ENCODE measurements at regions of chr4 and their contacts with region 1.

Region 1: DNA sequence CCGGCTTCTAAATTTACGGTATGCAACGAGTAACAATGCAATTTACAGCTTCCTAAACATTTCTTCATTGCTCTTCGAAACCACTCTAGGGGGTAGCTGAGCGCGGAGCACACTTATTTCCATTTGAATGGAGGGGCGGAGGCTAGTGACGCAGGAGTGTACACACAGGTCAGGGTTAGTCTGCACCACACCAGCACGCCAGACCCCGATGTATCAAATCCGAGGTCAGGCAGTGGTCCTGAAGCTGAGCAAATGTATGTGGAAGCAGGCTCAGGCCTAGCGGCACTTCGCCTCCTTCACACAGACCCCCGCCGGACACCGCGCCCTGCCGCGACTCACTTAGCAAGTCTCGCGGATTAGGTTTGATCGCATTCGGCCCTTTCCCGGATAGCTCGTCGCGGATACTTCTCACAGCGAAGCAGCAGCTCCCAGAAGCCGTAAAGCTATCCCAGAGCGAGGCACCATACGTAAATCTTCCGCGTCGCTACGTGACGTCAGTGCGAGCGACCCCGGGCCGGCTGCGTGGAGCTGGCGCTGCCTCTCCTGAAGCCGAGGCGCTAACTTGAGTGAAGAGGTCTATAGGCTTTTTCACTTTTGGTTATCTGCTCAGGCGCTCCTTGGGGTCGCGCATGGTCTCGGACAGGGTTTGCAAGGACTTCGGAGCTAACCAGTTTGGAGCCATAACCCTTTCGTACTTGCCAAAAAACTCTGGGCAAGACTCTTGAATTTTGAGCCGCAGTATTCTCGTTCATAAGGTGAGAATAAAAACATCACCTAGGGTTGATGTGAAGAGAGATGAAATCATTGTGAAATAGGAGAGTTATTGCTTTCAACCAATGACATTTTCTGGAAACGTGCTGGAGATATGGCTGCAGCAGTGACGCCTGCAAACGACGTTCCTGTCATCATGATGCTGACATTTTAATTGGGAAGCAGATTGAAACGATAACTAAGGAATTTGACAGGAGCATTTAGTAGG is at the start of gene AASDH:
- DNase-seq: peak; percentile 94
- H3K4me3 Mint-ChIP-seq: peak within 1 kb of the TSS; percentile 96
- H3K27ac Mint-ChIP-seq: peak within 1 kb of the TSS; percentile 99
- H3K4me1 Mint-ChIP-seq: peaks cover 29% of the 10 kb centered on the region
- H3K27me3 Mint-ChIP-seq: no peaks in the 10 kb centered on the region
- CTCF ChIP-seq: no peak
- total RNA-seq, gene AASDH: 10.8 and 12.9 TPM in 2 replicates

Region 2: GRCh38 chr4:55948726-55949474 is 438.4 kb before region 1 on chr4 and contains the start of gene CEP135:
- CTCF ChIA-PET with region 1: interaction called, 7 read pairs
- POLR2A ChIA-PET with region 1: interaction called, 28 read pairs
- intact Hi-C with region 1: no loop called
- DNase-seq: peak; percentile 90
- H3K4me3 Mint-ChIP-seq: peak within 1 kb of the TSS; percentile 91
- H3K27ac Mint-ChIP-seq: peak within 1 kb of the TSS; percentile 97
- H3K4me1 Mint-ChIP-seq: peaks cover 23% of the 10 kb centered on the region
- H3K27me3 Mint-ChIP-seq: no peaks in the 10 kb centered on the region
- CTCF ChIP-seq: peak; percentile 91
- total RNA-seq, gene CEP135: 12.4 and 14.0 TPM in 2 replicates

Region 3: GRCh38 chr4:56400560-56400959 is 13.2 kb after region 1 on chr4:
- CTCF ChIA-PET with region 1: interaction called, 4 read pairs
- POLR2A ChIA-PET with region 1: interaction called, 29 read pairs
- intact Hi-C with region 1: no loop called
- DNase-seq: no peak
- H3K4me3 Mint-ChIP-seq: no peak overlapping the region
- H3K27ac Mint-ChIP-seq: no peak overlapping the region
- H3K4me1 Mint-ChIP-seq: no peaks in the 10 kb centered on the region
- H3K27me3 Mint-ChIP-seq: no peaks in the 10 kb centered on the region
- CTCF ChIP-seq: no peak

Region 4: DNA sequence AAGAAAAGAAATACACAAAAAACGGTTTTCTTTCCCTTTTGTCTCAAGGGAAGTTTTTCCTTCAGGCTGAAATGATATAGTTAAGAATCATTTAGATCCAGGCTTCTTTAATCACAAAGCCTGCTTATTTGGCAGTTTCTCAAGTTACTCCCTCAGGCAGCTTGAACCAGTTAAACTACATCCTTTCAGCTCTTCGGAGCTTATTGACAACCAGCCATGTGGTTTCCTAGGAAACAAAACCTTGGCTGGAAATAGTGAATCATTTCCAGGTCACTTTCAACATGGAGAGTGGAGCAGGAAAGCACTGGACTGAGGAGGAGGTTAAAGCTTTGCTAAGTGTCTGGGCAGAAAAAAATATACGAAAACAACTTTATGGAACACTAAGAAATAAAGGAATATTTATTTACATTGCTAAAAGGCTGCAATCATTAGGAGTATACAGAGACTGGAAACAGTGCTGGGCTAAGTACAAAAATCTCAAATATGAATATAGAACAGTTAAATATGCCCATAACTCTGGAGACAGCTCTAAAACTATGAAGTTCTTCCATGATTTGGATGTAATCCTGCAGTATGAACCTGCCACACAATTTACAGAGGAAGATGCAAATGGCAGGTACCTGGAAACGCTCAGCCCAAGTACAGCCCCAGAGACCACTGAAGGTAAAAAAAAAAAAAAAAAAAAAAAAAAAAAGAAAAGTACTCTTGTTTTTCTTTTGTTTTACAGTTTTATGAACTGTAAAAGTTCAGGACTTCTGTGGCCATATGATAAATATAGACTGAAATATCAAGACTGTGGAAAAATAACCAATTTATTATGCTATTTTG is 23.1 kb after region 1 on chr4:
- CTCF ChIA-PET with region 1: interaction called, 4 read pairs
- POLR2A ChIA-PET with region 1: interaction called, 50 read pairs
- intact Hi-C with region 1: no loop called
- DNase-seq: peak; percentile 96
- H3K4me3 Mint-ChIP-seq: peak overlapping the region; percentile 72
- H3K27ac Mint-ChIP-seq: peak overlapping the region; percentile 98
- H3K4me1 Mint-ChIP-seq: peaks cover 14% of the 10 kb centered on the region
- H3K27me3 Mint-ChIP-seq: no peaks in the 10 kb centered on the region
- CTCF ChIP-seq: no peak

Region 5: DNA sequence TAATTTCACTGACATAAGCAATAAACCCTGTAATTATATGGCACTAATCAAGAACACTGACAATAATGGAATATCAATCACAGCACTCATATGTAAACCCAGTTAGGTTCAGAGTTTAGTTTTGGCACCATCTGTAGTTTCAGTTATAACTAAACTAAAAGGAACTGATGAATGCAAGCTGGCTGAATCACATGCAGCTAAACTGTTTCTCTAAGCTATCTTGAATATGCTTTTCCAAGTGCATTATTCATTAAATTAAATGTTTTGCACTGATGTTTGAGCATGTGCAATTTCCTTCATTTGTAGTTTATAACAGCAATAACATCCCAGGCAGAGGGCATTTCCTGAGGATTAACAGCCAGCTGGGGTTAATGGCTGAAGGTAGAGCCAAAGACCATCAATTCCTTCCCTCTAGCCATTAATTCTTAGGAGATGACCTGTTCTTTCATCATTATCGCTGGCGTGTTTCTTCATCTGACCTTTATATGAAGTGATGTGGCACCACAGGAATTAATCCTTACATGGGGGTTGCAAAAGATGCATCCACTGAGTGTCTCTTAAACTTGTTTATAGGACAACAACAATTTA is 1285.6 kb after region 1 on chr4:
- CTCF ChIA-PET with region 1: no interaction called
- POLR2A ChIA-PET with region 1: no interaction called
- intact Hi-C with region 1: no loop called
- DNase-seq: peak; percentile 0
- H3K4me3 Mint-ChIP-seq: no peak overlapping the region
- H3K27ac Mint-ChIP-seq: no peak overlapping the region
- H3K4me1 Mint-ChIP-seq: no peaks in the 10 kb centered on the region
- H3K27me3 Mint-ChIP-seq: no peaks in the 10 kb centered on the region
- CTCF ChIP-seq: no peak

Measured in MCF 10A (cell line).